T-cell (primary cell): ENCODE measurements at regions of chr14 and their contacts with region 1.

Region 1: GRCh38 chr14:77197988-77198387 is 16.4 kb downstream of the TMEM63C start:
- DNase-seq: no peak
- ATAC-seq: no peak
- H3K4me3 ChIP-seq: no peak overlapping the region
- H3K4me3 Mint-ChIP-seq: no peak overlapping the region
- H3K27ac ChIP-seq: no peak overlapping the region
- H3K27ac Mint-ChIP-seq: no peak overlapping the region
- H3K4me1 ChIP-seq: no peaks in the 10 kb centered on the region
- H3K4me1 Mint-ChIP-seq: no peaks in the 10 kb centered on the region
- H3K27me3 ChIP-seq: peaks cover 0 to 26% of the 10 kb centered on the region in 2 experiments
- H3K27me3 Mint-ChIP-seq: peaks cover 14 to 34% of the 10 kb centered on the region in 2 donors

Region 2: DNA sequence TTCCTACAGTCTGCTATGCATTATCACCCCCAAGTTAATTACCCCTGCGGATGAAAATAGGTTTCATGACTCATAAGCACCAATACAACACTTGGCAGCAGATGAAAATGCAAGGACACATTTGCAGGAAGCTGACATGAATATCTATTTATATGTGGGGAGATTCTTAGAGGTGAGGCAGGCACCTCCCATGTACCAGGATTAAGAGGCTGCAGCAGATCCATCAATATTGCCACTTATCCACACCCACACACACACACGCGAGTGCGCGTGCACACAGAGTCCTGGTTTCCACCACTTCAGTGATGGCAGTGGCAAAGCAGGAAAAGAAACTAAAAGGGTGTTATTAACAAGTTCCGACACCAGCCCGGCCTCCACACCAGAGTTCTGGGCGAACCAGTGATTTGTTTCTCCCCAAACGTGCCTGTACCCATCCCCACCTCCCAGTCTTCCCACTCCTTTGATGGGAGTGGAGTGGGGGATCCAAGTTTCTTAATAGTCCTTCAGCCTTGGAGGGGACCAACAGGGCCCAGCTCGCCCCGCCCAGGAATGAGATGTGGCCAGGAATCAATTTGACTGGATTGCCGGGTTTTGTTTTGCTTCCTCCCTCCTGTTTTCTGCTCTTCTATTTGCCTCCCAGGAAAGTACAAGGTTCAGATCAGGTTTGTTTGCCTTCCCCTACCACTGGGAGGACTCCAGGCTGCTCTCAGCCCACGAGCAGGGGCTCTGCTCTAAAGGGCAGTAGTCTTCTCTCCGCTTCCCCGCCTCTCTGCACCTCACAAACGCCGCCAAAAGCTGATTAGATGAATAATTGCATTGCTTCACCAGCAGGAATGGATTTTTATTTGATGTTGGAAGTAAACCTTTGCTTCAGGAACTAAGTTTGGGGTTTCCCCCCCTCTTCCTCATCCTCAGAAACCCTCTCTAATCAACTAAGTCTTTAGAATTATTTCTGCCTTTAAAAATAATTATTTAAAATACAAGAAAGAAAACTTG is 174.7 kb before region 1 on chr14:
- CTCF ChIA-PET with region 1: no interaction called
- POLR2A ChIA-PET with region 1: interaction called in 1 of 2 experiments, 11 read pairs
- DNase-seq: no peak
- ATAC-seq: no peak
- H3K4me3 ChIP-seq: no peak overlapping the region
- H3K4me3 Mint-ChIP-seq: peak overlapping the region in 2 of 3 donors; percentile 25 to 76
- H3K27ac ChIP-seq: peak overlapping the region; percentile 47
- H3K27ac Mint-ChIP-seq: peak overlapping the region; percentile 84 to 85
- H3K4me1 ChIP-seq: peaks cover 15 to 51% of the 10 kb centered on the region in 2 experiments
- H3K4me1 Mint-ChIP-seq: peaks cover 30 to 46% (median 38%) of the 10 kb centered on the region in 3 donors
- H3K27me3 ChIP-seq: no peaks in the 10 kb centered on the region
- H3K27me3 Mint-ChIP-seq: no peaks in the 10 kb centered on the region

Region 3: GRCh38 chr14:78509516-78509915 is 1311.5 kb after region 1 on chr14:
- CTCF ChIA-PET with region 1: no interaction called
- POLR2A ChIA-PET with region 1: no interaction called
- DNase-seq: no peak
- ATAC-seq: no peak
- H3K4me3 ChIP-seq: no peak overlapping the region
- H3K4me3 Mint-ChIP-seq: no peak overlapping the region
- H3K27ac ChIP-seq: no peak overlapping the region
- H3K27ac Mint-ChIP-seq: no peak overlapping the region
- H3K4me1 ChIP-seq: no peaks in the 10 kb centered on the region
- H3K4me1 Mint-ChIP-seq: no peaks in the 10 kb centered on the region
- H3K27me3 ChIP-seq: no peaks in the 10 kb centered on the region
- H3K27me3 Mint-ChIP-seq: no peaks in the 10 kb centered on the region